Activated CD4-positive, alpha-beta memory T cell treated with anti-CD3 and anti-CD28 coated beads, Interleukin-2, amount 10 ng/mL, durations not matched to agents 7 days and 5 days (primary cell): ENCODE measurements at regions of chr4 and their contacts with region 1.

Region 1: DNA sequence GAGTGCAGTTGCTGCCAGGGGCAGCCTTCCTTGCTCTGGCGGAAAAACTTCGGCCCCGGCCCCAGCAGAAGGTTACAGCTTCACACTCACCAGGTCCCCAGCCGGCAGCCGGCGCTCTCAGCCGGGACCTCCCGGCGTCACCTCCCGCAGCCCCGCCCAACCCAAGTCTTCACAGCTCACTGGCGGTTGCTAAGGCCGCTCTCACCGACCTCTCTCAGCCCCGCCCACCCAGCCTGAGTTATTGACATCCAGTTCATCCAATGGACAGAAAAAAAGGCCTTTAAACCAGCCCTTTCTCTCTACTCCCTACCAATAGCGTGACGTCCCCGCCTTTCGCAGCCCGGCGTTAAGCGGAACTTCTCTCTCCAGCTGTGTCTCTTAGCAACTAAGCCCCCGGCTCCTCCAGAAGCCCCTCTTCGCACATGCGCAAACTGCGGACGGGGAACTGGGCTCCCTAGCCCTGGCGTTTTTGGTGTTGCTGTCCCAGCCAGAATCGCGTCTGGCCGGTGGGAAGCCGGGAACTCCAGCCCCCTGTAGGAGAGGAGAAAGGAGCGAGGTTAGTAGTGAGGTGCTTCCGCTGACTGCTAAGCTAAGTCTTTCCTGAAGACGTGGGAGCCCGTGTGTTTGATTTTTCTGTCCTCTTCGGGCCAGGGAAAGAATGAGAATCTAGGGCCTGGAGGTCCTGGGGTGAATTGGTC is at the start of gene BBS12:
- DNase-seq: peak; percentile 99
- H3K4me3 Mint-ChIP-seq: peak within 1 kb of the TSS; percentile 83
- H3K27ac Mint-ChIP-seq: peak within 1 kb of the TSS; percentile 91
- H3K4me1 Mint-ChIP-seq: peaks cover 23% of the 10 kb centered on the region
- H3K27me3 Mint-ChIP-seq: no peaks in the 10 kb centered on the region
- total RNA-seq, gene BBS12: 3.7 to 5.0 TPM

Region 2: DNA sequence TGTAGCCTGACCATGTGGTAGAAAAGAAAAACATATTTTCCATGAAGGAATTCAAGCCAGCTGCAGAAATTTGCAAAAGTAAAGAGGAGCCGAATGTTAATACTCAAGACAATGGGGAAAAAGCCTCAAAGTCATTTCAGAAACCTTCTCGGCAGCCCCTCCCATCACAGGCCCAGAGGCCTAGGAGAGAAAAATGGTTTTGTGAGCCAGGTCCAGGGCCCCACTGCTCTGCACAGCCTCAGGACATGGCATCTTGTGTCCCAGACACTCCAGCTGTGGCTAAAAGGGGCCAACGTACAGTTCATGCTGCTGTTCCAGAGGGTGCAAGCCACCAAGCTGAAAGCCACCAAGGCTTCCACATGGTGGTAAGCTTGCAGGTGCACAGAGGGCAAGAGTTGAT is 50.9 kb before region 1 on chr4:
- CTCF ChIA-PET with region 1: no interaction called
- POLR2A ChIA-PET with region 1: no interaction called
- DNase-seq: no peak
- H3K4me3 Mint-ChIP-seq: no peak overlapping the region
- H3K27ac Mint-ChIP-seq: no peak overlapping the region
- H3K4me1 Mint-ChIP-seq: no peaks in the 10 kb centered on the region
- H3K27me3 Mint-ChIP-seq: peaks cover 13% of the 10 kb centered on the region

Region 3: GRCh38 chr4:122716825-122717448 is 15.5 kb before region 1 on chr4:
- CTCF ChIA-PET with region 1: interaction called, 26 read pairs
- POLR2A ChIA-PET with region 1: interaction called, 7 read pairs
- DNase-seq: peak; percentile 77
- H3K4me3 Mint-ChIP-seq: no peak overlapping the region
- H3K27ac Mint-ChIP-seq: no peak overlapping the region
- H3K4me1 Mint-ChIP-seq: peaks cover 29% of the 10 kb centered on the region
- H3K27me3 Mint-ChIP-seq: no peaks in the 10 kb centered on the region

Region 4: DNA sequence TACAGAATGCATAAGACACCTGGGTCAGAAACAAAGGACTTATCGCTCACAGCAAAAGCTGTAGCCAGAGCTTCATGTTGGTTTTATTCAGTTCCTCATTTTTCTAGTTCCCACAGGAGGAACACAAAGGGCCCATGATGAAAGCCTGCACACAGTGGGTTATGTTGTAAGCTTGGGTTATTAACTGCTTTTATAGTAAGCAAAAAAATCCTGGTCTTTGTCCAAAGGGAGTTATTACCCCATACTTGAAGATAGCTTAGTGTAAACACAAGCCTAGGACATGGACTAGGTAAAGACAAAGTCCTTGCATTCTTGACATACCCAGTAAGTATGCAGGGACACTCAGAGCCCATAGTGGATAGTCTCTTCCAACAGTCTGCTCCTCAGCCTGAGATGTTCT is 11.8 kb after region 1 on chr4:
- CTCF ChIA-PET with region 1: interaction called, 26 read pairs
- POLR2A ChIA-PET with region 1: interaction called, 23 read pairs
- DNase-seq: no peak
- H3K4me3 Mint-ChIP-seq: no peak overlapping the region
- H3K27ac Mint-ChIP-seq: no peak overlapping the region
- H3K4me1 Mint-ChIP-seq: peaks cover 33% of the 10 kb centered on the region
- H3K27me3 Mint-ChIP-seq: no peaks in the 10 kb centered on the region

Region 5: GRCh38 chr4:122914292-122914904 is 181.9 kb after region 1 on chr4:
- CTCF ChIA-PET with region 1: interaction called, 22 read pairs
- POLR2A ChIA-PET with region 1: interaction called, 3 read pairs
- DNase-seq: no peak
- H3K4me3 Mint-ChIP-seq: no peak overlapping the region
- H3K27ac Mint-ChIP-seq: no peak overlapping the region
- H3K4me1 Mint-ChIP-seq: peaks cover 3% of the 10 kb centered on the region
- H3K27me3 Mint-ChIP-seq: no peaks in the 10 kb centered on the region

Region 6: GRCh38 chr4:122930862-122931261 is 198.4 kb after region 1 on chr4:
- CTCF ChIA-PET with region 1: interaction called, 22 read pairs
- POLR2A ChIA-PET with region 1: no interaction called
- DNase-seq: no peak
- H3K4me3 Mint-ChIP-seq: no peak overlapping the region
- H3K27ac Mint-ChIP-seq: no peak overlapping the region
- H3K4me1 Mint-ChIP-seq: peaks cover 48% of the 10 kb centered on the region
- H3K27me3 Mint-ChIP-seq: no peaks in the 10 kb centered on the region